ENCODE measurements at regions of chr15 and their contacts with region 1.

Region 1: DNA sequence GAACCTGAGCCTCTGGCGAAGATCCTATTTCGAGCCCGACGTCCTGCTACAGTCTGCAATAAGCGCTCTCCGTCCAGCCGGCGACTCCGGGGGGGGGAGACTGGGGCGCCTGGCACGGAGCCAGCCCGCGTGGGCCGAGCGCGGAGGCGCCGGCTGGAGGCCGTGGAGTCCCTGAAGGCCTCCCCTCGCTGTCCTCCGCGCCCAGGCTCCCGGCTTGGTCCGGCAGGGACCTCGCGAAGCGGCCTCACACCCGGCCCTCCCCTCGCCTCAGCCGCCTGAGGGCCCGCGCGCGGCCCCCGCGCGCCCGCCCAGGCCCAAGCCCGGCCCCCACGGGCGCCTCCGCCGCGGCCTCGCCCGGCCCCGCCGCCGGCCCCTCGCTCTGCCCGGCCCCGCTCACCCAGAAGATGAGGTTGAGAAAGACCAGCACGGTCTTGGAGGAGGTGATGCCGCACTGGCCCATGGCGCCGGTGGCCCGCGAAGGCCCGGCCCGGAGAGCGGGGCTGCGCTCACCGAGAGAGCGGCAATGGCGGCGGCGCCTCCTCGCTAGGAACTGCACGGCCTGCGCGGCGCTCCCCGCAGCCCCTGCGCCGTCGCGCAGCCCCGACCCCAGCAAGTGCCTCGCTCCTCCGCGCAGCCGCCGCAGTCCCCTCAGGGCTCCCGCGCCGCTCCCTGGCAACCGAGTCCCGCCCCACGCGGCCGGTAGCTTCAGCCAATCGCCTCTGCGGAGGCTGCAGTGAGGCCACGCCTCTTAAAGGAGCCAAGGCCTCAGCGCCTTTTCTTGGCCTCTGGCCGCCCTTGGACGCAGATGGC is at the start of gene TSPAN3:
- DNase-seq: peak; percentile 83 to 95 (median 92)
- ATAC-seq: peak; percentile 99
- H3K4me3 ChIP-seq: peak within 1 kb of the TSS; percentile 47 to 74
- H3K4me3 Mint-ChIP-seq: peak within 1 kb of the TSS; percentile 85
- H3K27ac ChIP-seq: peak within 1 kb of the TSS; percentile 52 to 56
- H3K27ac Mint-ChIP-seq: peak within 1 kb of the TSS; percentile 76
- H3K4me1 ChIP-seq: peaks cover 17% of the 10 kb centered on the region
- H3K4me1 Mint-ChIP-seq: peaks cover 36% of the 10 kb centered on the region
- H3K27me3 ChIP-seq: no peaks in the 10 kb centered on the region
- H3K27me3 Mint-ChIP-seq: peaks cover 3% of the 10 kb centered on the region
- CTCF ChIP-seq: no peak
- total RNA-seq, gene TSPAN3: 21.4 to 22.7 TPM

Region 2: GRCh38 chr15:76905013-76905839 is 165.5 kb before region 1 on chr15 and contains the start of gene SCAPER:
- CTCF ChIA-PET with region 1: no interaction called
- POLR2A ChIA-PET with region 1: interaction called, 4 read pairs
- intact Hi-C with region 1: loop called (anchors 1 kb)
- DNase-seq: peak; percentile 72 to 95 (median 92)
- ATAC-seq: peak; percentile 86
- H3K4me3 ChIP-seq: peak within 1 kb of the TSS; percentile 82 to 88
- H3K4me3 Mint-ChIP-seq: peak within 1 kb of the TSS; percentile 91
- H3K27ac ChIP-seq: peak within 1 kb of the TSS; percentile 47 to 81
- H3K27ac Mint-ChIP-seq: peak within 1 kb of the TSS; percentile 96
- H3K4me1 ChIP-seq: peaks cover 24% of the 10 kb centered on the region
- H3K4me1 Mint-ChIP-seq: peaks cover 36% of the 10 kb centered on the region
- H3K27me3 ChIP-seq: no peaks in the 10 kb centered on the region
- H3K27me3 Mint-ChIP-seq: no peaks in the 10 kb centered on the region
- CTCF ChIP-seq: no peak
- total RNA-seq, gene SCAPER: 21.7 to 29.7 TPM

Region 3: GRCh38 chr15:76994971-76995945 is 75.4 kb before region 1 on chr15 and contains the start of gene PSTPIP1:
- CTCF ChIA-PET with region 1: no interaction called
- POLR2A ChIA-PET with region 1: interaction called, 3 read pairs
- intact Hi-C with region 1: loop called in 1 of 2 experiments (anchors 5 kb)
- DNase-seq: peak; percentile 42 to 89 (median 77)
- ATAC-seq: peak; percentile 71
- H3K4me3 ChIP-seq: peak within 1 kb of the TSS; percentile 87
- H3K4me3 Mint-ChIP-seq: peak within 1 kb of the TSS; percentile 90
- H3K27ac ChIP-seq: peak within 1 kb of the TSS; percentile 80 to 81
- H3K27ac Mint-ChIP-seq: peak within 1 kb of the TSS; percentile 97
- H3K4me1 ChIP-seq: peaks cover 64% of the 10 kb centered on the region
- H3K4me1 Mint-ChIP-seq: peaks cover 64% of the 10 kb centered on the region
- H3K27me3 ChIP-seq: no peaks in the 10 kb centered on the region
- H3K27me3 Mint-ChIP-seq: no peaks in the 10 kb centered on the region
- CTCF ChIP-seq: no peak
- total RNA-seq, gene PSTPIP1: 86.7 to 88.0 TPM

Region 4: DNA sequence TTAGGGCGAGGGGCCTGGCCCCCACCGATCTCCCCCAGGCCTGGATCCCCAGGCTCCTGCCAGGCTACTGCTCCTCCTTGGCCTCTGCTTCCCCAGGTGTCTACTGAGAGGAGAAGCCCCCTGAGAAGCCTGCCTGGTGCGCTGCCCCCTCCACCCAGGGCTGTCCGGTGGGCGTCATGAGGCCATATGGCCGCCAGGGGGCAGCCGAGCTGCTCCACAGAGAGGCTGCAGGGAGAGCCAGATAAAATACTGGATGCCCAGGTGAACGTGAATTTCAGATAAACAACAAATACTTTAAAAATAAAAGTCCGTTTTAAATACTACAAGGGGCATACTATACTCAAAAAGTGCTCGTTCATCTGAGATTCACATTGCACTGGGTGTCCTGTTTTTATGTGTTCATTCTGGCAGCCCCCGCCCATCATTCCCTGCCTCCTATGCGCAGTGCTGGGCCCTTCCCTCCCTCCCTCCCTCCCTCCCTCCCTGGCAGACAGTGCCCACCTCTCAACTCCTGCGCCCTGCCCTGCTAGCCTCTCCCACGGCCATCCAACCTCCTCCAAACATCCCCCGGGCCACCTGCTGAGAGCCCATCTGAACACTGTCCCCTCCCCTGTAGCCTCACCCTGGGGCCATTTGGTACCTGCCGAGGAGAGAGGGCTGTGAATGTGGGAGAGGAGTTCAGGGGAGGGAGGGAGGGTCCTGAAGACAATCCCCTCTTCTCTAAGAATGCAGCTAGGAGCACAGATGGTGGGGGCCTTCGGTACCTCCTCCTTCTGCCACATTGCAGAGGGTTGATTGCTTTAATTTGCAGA is 46.2 kb before region 1 on chr15:
- CTCF ChIA-PET with region 1: no interaction called
- POLR2A ChIA-PET with region 1: no interaction called
- intact Hi-C with region 1: loop called in 1 of 2 experiments (anchors 5 kb)
- DNase-seq: peak; percentile 39 to 83 (median 71)
- ATAC-seq: no peak
- H3K4me3 ChIP-seq: no peak overlapping the region
- H3K4me3 Mint-ChIP-seq: no peak overlapping the region
- H3K27ac ChIP-seq: peak overlapping the region in 1 of 2 experiments; percentile 85
- H3K27ac Mint-ChIP-seq: peak overlapping the region; percentile 74
- H3K4me1 ChIP-seq: peaks cover 49% of the 10 kb centered on the region
- H3K4me1 Mint-ChIP-seq: peaks cover 56% of the 10 kb centered on the region
- H3K27me3 ChIP-seq: no peaks in the 10 kb centered on the region
- H3K27me3 Mint-ChIP-seq: no peaks in the 10 kb centered on the region
- CTCF ChIP-seq: peak; percentile 96

Region 5: GRCh38 chr15:77048135-77048876 is 22.4 kb before region 1 on chr15:
- CTCF ChIA-PET with region 1: no interaction called
- POLR2A ChIA-PET with region 1: interaction called, 3 read pairs
- intact Hi-C with region 1: loop called in 1 of 2 experiments (anchors 2 kb)
- DNase-seq: no peak
- ATAC-seq: no peak
- H3K4me3 ChIP-seq: no peak overlapping the region
- H3K4me3 Mint-ChIP-seq: no peak overlapping the region
- H3K27ac ChIP-seq: no peak overlapping the region
- H3K27ac Mint-ChIP-seq: no peak overlapping the region
- H3K4me1 ChIP-seq: no peaks in the 10 kb centered on the region
- H3K4me1 Mint-ChIP-seq: peaks cover 11% of the 10 kb centered on the region
- H3K27me3 ChIP-seq: no peaks in the 10 kb centered on the region
- H3K27me3 Mint-ChIP-seq: no peaks in the 10 kb centered on the region
- CTCF ChIP-seq: no peak

Region 6: DNA sequence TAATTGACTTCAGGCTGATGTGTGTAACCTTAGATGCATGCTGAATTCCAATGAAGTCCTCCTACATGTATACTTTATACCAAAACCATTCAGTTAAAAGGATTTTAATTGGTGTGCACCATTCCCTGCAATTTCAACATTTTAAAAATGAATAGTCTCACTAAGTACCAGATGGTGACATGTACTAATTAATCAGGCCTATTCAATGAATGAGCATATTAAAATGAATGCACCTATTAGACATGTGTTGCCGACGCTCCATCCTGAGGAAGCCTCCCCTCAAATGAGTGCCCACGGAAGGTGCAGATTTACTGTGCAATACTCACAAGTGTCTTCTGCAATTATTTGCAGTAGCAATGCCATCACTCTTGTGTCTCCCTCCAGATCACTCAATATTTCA is 124.9 kb after region 1 on chr15:
- CTCF ChIA-PET with region 1: no interaction called
- POLR2A ChIA-PET with region 1: no interaction called
- intact Hi-C with region 1: no loop called
- DNase-seq: no peak
- ATAC-seq: no peak
- H3K4me3 ChIP-seq: no peak overlapping the region
- H3K4me3 Mint-ChIP-seq: no peak overlapping the region
- H3K27ac ChIP-seq: no peak overlapping the region
- H3K27ac Mint-ChIP-seq: no peak overlapping the region
- H3K4me1 ChIP-seq: no peaks in the 10 kb centered on the region
- H3K4me1 Mint-ChIP-seq: no peaks in the 10 kb centered on the region
- H3K27me3 ChIP-seq: no peaks in the 10 kb centered on the region
- H3K27me3 Mint-ChIP-seq: no peaks in the 10 kb centered on the region
- CTCF ChIP-seq: no peak

Region 7: GRCh38 chr15:78149068-78149804 is 1078.5 kb after region 1 on chr15 and contains the start of gene IDH3A:
- CTCF ChIA-PET with region 1: no interaction called
- POLR2A ChIA-PET with region 1: no interaction called
- intact Hi-C with region 1: loop called in 1 of 2 experiments (anchors 5 kb)
- DNase-seq: peak; percentile 99 to 100 (median 100)
- ATAC-seq: peak; percentile 97
- H3K4me3 ChIP-seq: peak within 1 kb of the TSS; percentile 72 to 81
- H3K4me3 Mint-ChIP-seq: peak within 1 kb of the TSS; percentile 91
- H3K27ac ChIP-seq: peak within 1 kb of the TSS; percentile 65 to 67
- H3K27ac Mint-ChIP-seq: peak within 1 kb of the TSS; percentile 91
- H3K4me1 ChIP-seq: peaks cover 18% of the 10 kb centered on the region
- H3K4me1 Mint-ChIP-seq: peaks cover 44% of the 10 kb centered on the region
- H3K27me3 ChIP-seq: no peaks in the 10 kb centered on the region
- H3K27me3 Mint-ChIP-seq: no peaks in the 10 kb centered on the region
- CTCF ChIP-seq: no peak
- total RNA-seq, gene IDH3A: 54.4 to 61.0 TPM

Region 8: GRCh38 chr15:78552597-78552996 is 1481.9 kb after region 1 on chr15:
- CTCF ChIA-PET with region 1: no interaction called
- POLR2A ChIA-PET with region 1: no interaction called
- intact Hi-C with region 1: no loop called
- DNase-seq: no peak
- ATAC-seq: no peak
- H3K4me3 ChIP-seq: no peak overlapping the region
- H3K4me3 Mint-ChIP-seq: no peak overlapping the region
- H3K27ac ChIP-seq: no peak overlapping the region
- H3K27ac Mint-ChIP-seq: no peak overlapping the region
- H3K4me1 ChIP-seq: no peaks in the 10 kb centered on the region
- H3K4me1 Mint-ChIP-seq: no peaks in the 10 kb centered on the region
- H3K27me3 ChIP-seq: no peaks in the 10 kb centered on the region
- H3K27me3 Mint-ChIP-seq: no peaks in the 10 kb centered on the region
- CTCF ChIP-seq: no peak